ENCODE measurements at regions of chr5 and their contacts with region 1.

Region 1: GRCh38 chr5:79020861-79021561 is 35.9 kb upstream of the ARSB start:
- DNase-seq: peak; percentile 43
- H3K4me3 ChIP-seq: peak overlapping the region; percentile 15; the same call in 1 of the 2 replicates
- H3K27ac ChIP-seq: no peak overlapping the region
- H3K27me3 ChIP-seq: no peaks in the 10 kb centered on the region
- CTCF ChIP-seq: peak; percentile 90

Region 2: GRCh38 chr5:78984439-78985115 is 36.4 kb before region 1 on chr5:
- CTCF ChIA-PET with region 1: interaction called, 11 read pairs
- POLR2A ChIA-PET with region 1: interaction called, 3 read pairs
- DNase-seq: peak; percentile 33
- H3K4me3 ChIP-seq: peak overlapping the region; percentile 73
- H3K27ac ChIP-seq: no peak overlapping the region
- H3K27me3 ChIP-seq: no peaks in the 10 kb centered on the region
- CTCF ChIP-seq: peak; percentile 54

Region 3: GRCh38 chr5:79048437-79048836 is 27.4 kb after region 1 on chr5:
- CTCF ChIA-PET with region 1: interaction called, 28 read pairs
- POLR2A ChIA-PET with region 1: no interaction called
- DNase-seq: no peak
- H3K4me3 ChIP-seq: no peak overlapping the region
- H3K27ac ChIP-seq: no peak overlapping the region
- H3K27me3 ChIP-seq: peaks cover 12% of the 10 kb centered on the region
- CTCF ChIP-seq: no peak

Region 4: GRCh38 chr5:79109527-79110492 is 88.8 kb after region 1 on chr5:
- CTCF ChIA-PET with region 1: interaction called, 21 read pairs
- POLR2A ChIA-PET with region 1: no interaction called
- DNase-seq: no peak
- H3K4me3 ChIP-seq: no peak overlapping the region
- H3K27ac ChIP-seq: no peak overlapping the region
- H3K27me3 ChIP-seq: peaks cover 48% of the 10 kb centered on the region
- CTCF ChIP-seq: peak; percentile 31

Region 5: GRCh38 chr5:79143684-79144379 is 122.8 kb after region 1 on chr5:
- CTCF ChIA-PET with region 1: interaction called, 13 read pairs
- POLR2A ChIA-PET with region 1: no interaction called
- DNase-seq: no peak
- H3K4me3 ChIP-seq: no peak overlapping the region
- H3K27ac ChIP-seq: no peak overlapping the region
- H3K27me3 ChIP-seq: no peaks in the 10 kb centered on the region
- CTCF ChIP-seq: no peak

Region 6: GRCh38 chr5:79464695-79465332 is 443.8 kb after region 1 on chr5:
- CTCF ChIA-PET with region 1: interaction called, 113 read pairs
- POLR2A ChIA-PET with region 1: no interaction called
- DNase-seq: no peak
- H3K4me3 ChIP-seq: no peak overlapping the region
- H3K27ac ChIP-seq: no peak overlapping the region
- H3K27me3 ChIP-seq: no peaks in the 10 kb centered on the region
- CTCF ChIP-seq: peak; percentile 67